Sigmoid colon (tissue), 7 donors: ENCODE measurements at regions of chr15 and their contacts with region 1.

Region 1: DNA sequence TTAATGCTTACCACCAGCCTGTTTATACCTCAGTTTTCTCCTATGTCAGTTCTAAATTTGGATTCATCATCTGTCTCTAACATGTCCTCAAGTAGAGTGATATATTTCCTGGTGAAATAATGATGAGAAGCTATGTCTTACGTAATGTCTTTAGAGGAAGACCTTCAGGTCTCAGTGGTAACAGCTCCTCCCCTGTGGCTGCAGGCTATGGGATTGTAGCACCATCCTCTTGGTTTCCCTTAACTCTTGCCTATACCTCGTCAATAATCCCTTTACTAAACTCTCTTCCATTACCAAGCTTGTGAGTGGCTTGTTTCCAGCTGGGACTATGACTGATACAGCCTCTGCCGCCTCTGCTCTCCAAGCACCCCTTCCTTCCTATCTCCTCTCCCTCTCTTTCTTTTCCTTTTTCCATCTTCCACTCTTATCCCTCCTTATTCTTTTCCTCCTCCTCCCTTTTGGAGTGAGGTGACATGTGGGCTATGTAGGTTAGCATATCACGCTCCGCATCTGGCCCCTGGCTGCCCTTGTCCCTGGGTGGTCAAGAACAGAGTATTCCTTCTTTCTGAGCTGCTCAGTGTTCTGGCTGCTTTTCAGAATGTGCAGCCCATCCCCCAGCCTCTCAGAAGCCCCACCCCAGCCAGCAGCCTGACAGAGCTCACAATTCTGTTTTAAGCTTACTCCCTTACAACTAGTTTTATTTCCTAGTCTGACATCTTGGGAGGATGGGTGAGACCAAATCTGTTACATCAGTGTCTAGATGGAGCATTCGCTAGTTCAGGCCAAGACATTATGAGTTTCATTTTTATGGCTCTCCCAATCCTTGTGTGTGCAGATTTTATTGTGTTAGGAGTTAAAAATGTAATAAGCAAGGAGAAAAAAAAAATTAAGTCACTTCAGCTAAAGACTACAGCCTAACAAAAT is 75.0 kb upstream of the RNU6-1 start:
- DNase-seq: peak; percentile 92
- H3K4me3 ChIP-seq: peak overlapping the region in 3 of 4 donors; percentile 7 to 24 (median 18)
- H3K27ac ChIP-seq: peak overlapping the region; percentile 87 to 91 (median 88)
- H3K4me1 ChIP-seq: peaks cover 0 to 73% (median 46%) of the 10 kb centered on the region in 4 donors
- H3K27me3 ChIP-seq: no peaks in the 10 kb centered on the region
- CTCF ChIP-seq: no peak
- EP300 ChIP-seq: peak in 1 of 4 donors; percentile 32
- POLR2A ChIP-seq: no peak

Region 2: DNA sequence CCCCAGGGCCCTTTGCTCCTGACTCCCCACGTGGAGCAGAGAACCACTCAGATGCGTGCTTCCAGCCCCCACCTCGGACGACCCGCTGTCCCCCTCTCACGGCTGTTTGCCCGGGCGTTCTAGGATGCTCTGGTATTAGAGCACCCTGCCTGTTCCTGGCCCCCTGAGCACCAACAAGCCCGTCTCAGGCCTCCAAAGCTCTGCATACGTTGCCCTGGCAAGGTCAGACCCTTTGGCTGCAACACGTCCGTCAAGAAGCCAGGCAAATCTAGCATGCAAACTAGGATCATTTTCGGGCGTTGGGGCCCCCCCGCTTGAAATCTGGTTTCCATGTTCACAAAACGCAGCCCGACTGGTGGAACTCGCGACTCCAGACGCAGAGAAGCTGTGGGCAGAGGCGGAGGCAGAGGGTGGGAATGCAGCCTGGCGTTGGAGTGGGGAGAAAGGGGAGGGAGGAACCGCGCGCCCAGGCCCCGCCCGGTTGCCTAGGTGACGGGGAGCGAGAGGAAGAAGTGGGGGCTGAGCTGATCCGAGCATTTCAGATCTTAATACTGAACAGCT is 53.2 kb after region 1 on chr15:
- intact Hi-C with region 1: loop called (anchors 5 kb)
- DNase-seq: peak; percentile 93
- H3K4me3 ChIP-seq: peak overlapping the region in 3 of 4 donors; percentile 39 to 44 (median 43)
- H3K27ac ChIP-seq: peak overlapping the region; percentile 38 to 73 (median 70)
- H3K4me1 ChIP-seq: peaks cover 0 to 28% (median 17%) of the 10 kb centered on the region in 4 donors
- H3K27me3 ChIP-seq: no peaks in the 10 kb centered on the region
- CTCF ChIP-seq: no peak
- EP300 ChIP-seq: no peak
- POLR2A ChIP-seq: no peak

Region 3: GRCh38 chr15:68017191-68017590 is 102.4 kb after region 1 on chr15:
- intact Hi-C with region 1: loop called (anchors 5 kb)
- DNase-seq: no peak
- H3K4me3 ChIP-seq: no peak overlapping the region
- H3K27ac ChIP-seq: no peak overlapping the region
- H3K4me1 ChIP-seq: peaks cover 0 to 15% (median 9%) of the 10 kb centered on the region in 4 donors
- H3K27me3 ChIP-seq: no peaks in the 10 kb centered on the region
- CTCF ChIP-seq: no peak
- EP300 ChIP-seq: no peak
- POLR2A ChIP-seq: no peak

Region 4: DNA sequence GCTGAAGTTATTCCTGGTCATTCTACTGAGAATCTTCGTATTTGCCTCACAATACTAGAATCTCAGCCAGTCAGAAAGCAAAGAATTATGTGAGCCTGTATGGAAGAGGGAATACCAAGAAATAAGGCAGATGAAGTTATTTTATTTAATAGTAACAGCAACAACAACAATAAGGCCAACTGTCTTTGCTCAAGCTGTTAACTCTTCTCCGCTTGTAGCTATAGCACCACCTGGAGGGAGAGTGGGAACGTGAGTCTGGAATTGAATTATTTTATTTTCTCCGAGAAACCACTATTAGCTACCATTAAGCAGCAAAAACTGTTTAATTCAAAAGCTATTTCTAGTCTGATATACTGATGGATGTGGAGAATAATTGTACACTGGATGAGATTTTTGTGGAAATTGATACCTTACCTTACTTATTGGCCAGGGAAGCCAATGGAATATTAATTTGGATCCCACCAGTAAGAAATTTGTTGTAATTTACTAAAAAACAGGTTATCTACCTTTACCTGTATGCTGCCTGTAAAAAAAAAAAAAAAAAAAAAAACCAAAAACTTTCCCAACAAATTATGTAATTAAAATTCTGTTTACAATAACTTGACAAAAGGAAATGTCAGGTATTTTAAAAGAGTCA is 240.2 kb after region 1 on chr15:
- intact Hi-C with region 1: loop called (anchors 5 kb)
- DNase-seq: no peak
- H3K4me3 ChIP-seq: no peak overlapping the region
- H3K27ac ChIP-seq: peak overlapping the region in 3 of 4 donors; percentile 8 to 81 (median 25)
- H3K4me1 ChIP-seq: peaks cover 0 to 63% (median 42%) of the 10 kb centered on the region in 4 donors
- H3K27me3 ChIP-seq: no peaks in the 10 kb centered on the region
- CTCF ChIP-seq: peak; percentile 61 to 76 (median 73)
- EP300 ChIP-seq: no peak
- POLR2A ChIP-seq: no peak